ENCODE measurements at regions of chr7 and their contacts with region 1.

Region 1: DNA sequence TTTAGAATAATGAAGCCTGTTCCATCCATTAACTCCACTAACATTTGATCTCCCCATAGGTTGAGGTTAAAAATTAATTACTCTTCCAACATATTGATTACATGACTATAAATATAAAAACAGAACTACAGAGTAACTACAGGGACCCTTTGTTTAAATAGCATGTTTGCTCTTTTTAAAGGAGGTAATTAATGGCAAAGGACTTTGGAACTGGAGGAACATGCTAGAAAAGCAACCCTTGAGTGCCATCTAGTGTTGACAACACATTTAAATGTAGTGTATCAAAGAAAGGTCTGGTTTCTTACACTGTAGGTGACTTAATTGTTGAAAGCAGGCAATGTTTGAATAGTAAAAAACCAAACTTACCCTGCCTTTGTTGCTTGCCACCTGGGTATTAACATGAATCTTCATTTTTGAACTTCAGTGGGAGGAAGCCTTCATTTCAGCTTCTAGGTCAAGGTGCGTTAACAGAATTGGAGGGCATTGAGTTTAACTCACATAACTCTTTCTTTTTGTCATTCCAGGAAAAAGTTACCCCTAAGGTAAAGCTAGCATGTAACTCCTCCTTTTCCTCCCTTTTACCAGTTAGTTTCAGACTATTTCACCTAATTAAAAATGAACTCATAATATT is 52.6 kb upstream of the CAPZA2 start:
- DNase-seq: peak; percentile 83
- H3K4me3 ChIP-seq: peak overlapping the region; percentile 17; the same call in 1 of the 2 replicates
- H3K27ac ChIP-seq: peak overlapping the region; percentile 55
- H3K4me1 ChIP-seq: peaks cover 41% of the 10 kb centered on the region
- H3K27me3 ChIP-seq: no peaks in the 10 kb centered on the region

Region 2: GRCh38 chr7:116173051-116174028 is 636.4 kb before region 1 on chr7:
- in situ Hi-C with region 1: loop called (anchors 10 kb)
- DNase-seq: peak; percentile 70
- H3K4me3 ChIP-seq: no peak overlapping the region
- H3K27ac ChIP-seq: no peak overlapping the region
- H3K4me1 ChIP-seq: peaks cover 58% of the 10 kb centered on the region
- H3K27me3 ChIP-seq: no peaks in the 10 kb centered on the region

Region 3: DNA sequence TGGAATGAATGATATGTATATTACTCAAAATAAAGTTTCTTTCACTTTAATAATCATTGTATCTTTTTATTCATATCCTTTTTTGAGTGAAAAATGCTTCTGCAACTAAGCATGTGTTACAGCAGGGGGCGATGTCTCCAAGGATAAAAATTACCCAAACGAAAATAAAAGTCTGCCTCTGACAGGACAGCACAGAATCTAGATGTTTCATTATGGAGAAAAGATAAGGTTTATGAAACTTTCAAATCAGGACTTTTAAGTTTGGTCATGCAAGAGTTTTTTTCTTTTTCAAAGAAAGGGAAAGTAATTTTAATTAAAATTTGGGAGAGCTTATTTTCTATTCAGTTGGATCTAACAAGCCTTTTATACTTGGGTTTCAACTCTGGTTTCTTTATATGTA is 551.0 kb before region 1 on chr7:
- in situ Hi-C with region 1: loop called (anchors 10 kb)
- DNase-seq: peak; percentile 82
- H3K4me3 ChIP-seq: 0 out of 2 replicates have a peak overlapping the region, but pooled peaks have one; percentile 10
- H3K27ac ChIP-seq: peak overlapping the region; percentile 84
- H3K4me1 ChIP-seq: peaks cover 18% of the 10 kb centered on the region
- H3K27me3 ChIP-seq: no peaks in the 10 kb centered on the region

Region 4: GRCh38 chr7:116588641-116589594 is 220.8 kb before region 1 on chr7:
- in situ Hi-C with region 1: loop called (anchors 10 kb)
- DNase-seq: peak; percentile 70
- H3K4me3 ChIP-seq: no peak overlapping the region
- H3K27ac ChIP-seq: peak overlapping the region; percentile 76
- H3K4me1 ChIP-seq: peaks cover 25% of the 10 kb centered on the region
- H3K27me3 ChIP-seq: no peaks in the 10 kb centered on the region

Region 5: DNA sequence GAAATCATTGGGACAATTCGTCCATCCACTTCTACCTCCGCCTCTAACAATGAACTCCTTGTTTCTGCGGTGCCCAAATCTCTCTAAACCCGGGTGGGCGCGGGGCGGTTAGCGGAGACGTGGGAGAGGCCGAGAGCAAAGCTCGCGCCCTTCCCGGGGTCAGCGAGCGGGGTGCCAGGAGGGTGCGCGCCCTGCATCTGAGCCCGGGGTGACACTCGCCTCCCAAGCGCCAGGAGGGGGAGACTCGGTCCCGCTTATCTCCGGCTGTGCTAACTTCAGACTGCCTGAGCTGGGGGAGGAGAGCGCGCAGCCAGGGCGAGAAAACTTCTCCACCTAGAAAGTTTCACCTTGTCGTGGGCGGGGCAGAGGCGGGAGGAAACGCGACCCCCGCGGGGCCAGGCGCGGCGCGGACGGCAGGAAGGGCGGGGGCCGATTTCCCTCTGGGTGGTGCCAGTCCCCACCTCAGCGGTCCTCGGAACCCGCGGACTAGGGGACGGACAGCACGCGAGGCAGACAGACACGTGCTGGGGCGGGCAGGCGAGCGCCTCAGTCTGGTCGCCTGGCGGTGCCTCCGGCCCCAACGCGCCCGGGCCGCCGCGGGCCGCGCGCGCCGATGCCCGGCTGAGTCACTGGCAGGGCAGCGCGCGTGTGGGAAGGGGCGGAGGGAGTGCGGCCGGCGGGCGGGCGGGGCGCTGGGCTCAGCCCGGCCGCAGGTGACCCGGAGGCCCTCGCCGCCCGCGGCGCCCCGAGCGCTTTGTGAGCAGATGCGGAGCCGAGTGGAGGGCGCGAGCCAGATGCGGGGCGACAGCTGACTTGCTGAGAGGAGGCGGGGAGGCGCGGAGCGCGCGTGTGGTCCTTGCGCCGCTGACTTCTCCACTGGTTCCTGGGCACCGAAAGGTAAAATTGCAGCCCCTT is 137.8 kb before region 1 on chr7 and contains the start of gene MET:
- in situ Hi-C with region 1: loop called (anchors 10 kb)
- DNase-seq: peak; percentile 92
- H3K4me3 ChIP-seq: peak within 1 kb of the TSS; percentile 99
- H3K27ac ChIP-seq: peak within 1 kb of the TSS; percentile 63
- H3K4me1 ChIP-seq: peaks cover 17% of the 10 kb centered on the region
- H3K27me3 ChIP-seq: no peaks in the 10 kb centered on the region
- total RNA-seq, gene MET: 62.3 and 68.8 TPM in 2 replicates

Region 6: DNA sequence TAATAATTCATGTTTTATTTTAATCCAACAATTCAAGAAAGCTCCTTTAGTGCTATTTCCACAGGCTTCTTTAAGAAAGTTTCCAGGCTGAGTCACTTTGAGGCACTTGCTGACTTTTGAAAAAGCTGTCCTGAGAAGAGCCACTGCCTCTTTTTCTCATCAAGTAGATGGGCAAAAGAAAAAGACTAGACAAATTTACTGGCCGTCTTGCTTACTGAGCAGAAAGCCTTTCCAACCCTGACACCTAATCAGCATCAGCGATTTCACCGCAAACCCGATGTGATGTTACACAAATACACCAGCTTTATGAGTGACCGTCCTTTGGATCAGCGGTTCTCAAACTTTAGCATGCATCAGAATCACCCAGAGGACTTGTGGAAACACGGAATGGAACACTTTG is 1039.2 kb after region 1 on chr7:
- in situ Hi-C with region 1: no loop called
- DNase-seq: no peak
- H3K4me3 ChIP-seq: no peak overlapping the region
- H3K27ac ChIP-seq: no peak overlapping the region
- H3K4me1 ChIP-seq: no peaks in the 10 kb centered on the region
- H3K27me3 ChIP-seq: no peaks in the 10 kb centered on the region

Measured in GM23248 (cell line).